ENCODE measurements at regions of chr19 and their contacts with region 1.

Region 1: GRCh38 chr19:1470203-1471009 is 8.6 kb downstream of the C19orf25 start:
- DNase-seq: no peak
- H3K4me3 ChIP-seq: peak overlapping the region in 2 of 3 experiments; percentile 5 to 26
- H3K27ac ChIP-seq: no peak overlapping the region
- H3K4me1 ChIP-seq: peaks cover 56% of the 10 kb centered on the region
- H3K27me3 ChIP-seq: peaks cover 26% of the 10 kb centered on the region
- CTCF ChIP-seq: no peak

Region 2: DNA sequence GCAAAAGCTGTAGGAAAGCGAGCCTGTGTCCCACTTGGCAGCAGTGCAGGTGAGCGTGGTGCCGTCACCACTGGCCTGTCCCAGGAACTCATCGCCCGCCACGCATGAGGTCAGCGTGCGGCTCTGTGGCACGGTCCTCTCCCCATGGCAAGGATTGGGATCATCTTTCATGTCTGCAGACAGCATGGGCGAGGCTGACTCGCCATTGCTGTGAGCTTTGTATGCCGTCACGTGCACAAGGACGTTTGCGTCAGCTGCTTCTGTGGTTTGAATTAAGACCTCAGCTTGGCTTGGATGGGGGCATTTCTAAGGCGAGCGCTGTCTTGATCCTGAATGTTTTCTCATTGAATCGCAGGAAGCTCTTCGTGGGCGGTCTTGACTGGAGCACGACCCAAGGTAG is 53.3 kb before region 1 on chr19:
- CTCF ChIA-PET with region 1: no interaction called
- dilution Hi-C with region 1: loop called (anchors 5 kb)
- in situ Hi-C with region 1: no loop called
- intact Hi-C with region 1: no loop called
- DNase-seq: no peak
- H3K4me3 ChIP-seq: no peak overlapping the region
- H3K27ac ChIP-seq: peak overlapping the region; percentile 72
- H3K4me1 ChIP-seq: peaks cover 27% of the 10 kb centered on the region
- H3K27me3 ChIP-seq: no peaks in the 10 kb centered on the region
- CTCF ChIP-seq: no peak

Region 3: GRCh38 chr19:1560286-1560882 is 90.0 kb after region 1 on chr19:
- CTCF ChIA-PET with region 1: no interaction called
- dilution Hi-C with region 1: loop called (anchors 5 kb)
- in situ Hi-C with region 1: no loop called
- intact Hi-C with region 1: no loop called
- DNase-seq: no peak
- H3K4me3 ChIP-seq: no peak overlapping the region
- H3K27ac ChIP-seq: no peak overlapping the region
- H3K4me1 ChIP-seq: no peaks in the 10 kb centered on the region
- H3K27me3 ChIP-seq: no peaks in the 10 kb centered on the region
- CTCF ChIP-seq: no peak

Region 4: GRCh38 chr19:1812469-1813196 is 342.2 kb after region 1 on chr19:
- CTCF ChIA-PET with region 1: no interaction called
- dilution Hi-C with region 1: loop called (anchors 5 kb)
- in situ Hi-C with region 1: no loop called
- intact Hi-C with region 1: no loop called
- DNase-seq: peak; percentile 95
- H3K4me3 ChIP-seq: peak overlapping the region; percentile 57 to 67 (median 58)
- H3K27ac ChIP-seq: peak overlapping the region; percentile 53
- H3K4me1 ChIP-seq: peaks cover 16% of the 10 kb centered on the region
- H3K27me3 ChIP-seq: no peaks in the 10 kb centered on the region
- CTCF ChIP-seq: peak; percentile 63 to 73

Region 5: GRCh38 chr19:2164020-2164998 is 693.9 kb after region 1 on chr19:
- CTCF ChIA-PET with region 1: no interaction called
- dilution Hi-C with region 1: no loop called
- in situ Hi-C with region 1: no loop called
- intact Hi-C with region 1: no loop called
- DNase-seq: peak; percentile 31
- H3K4me3 ChIP-seq: peak overlapping the region; percentile 82 to 95 (median 94)
- H3K27ac ChIP-seq: peak overlapping the region; percentile 62
- H3K4me1 ChIP-seq: peaks cover 25% of the 10 kb centered on the region
- H3K27me3 ChIP-seq: no peaks in the 10 kb centered on the region
- CTCF ChIP-seq: no peak

Measured in mammary epithelial cell (primary cell).